ENCODE measurements at regions of chr2 and their contacts with region 1.

Region 1: DNA sequence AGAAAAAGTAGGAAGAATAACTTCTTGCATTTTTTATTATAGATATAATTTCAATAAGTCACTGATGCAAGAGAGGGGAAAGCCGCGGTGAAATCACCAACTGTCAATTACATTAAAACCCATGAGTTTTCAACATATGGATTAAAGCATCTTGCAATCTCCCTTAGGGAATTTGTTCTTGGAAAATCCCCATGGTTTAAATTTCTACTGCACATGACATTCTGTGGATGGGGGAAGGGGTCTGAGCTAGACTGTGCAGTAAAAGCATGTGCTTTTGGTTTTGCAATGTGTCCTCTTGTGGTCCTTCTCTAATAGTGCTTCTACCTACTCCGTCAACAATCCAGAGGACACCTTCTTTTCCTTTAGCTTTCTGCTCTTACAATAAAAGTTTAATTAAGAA is 894.0 kb downstream of the DCDC2C start:
- DNase-seq: no peak
- H3K4me3 ChIP-seq: no peak overlapping the region
- H3K27ac ChIP-seq: no peak overlapping the region
- H3K4me1 ChIP-seq: no peaks in the 10 kb centered on the region
- CTCF ChIP-seq: no peak

Region 2: DNA sequence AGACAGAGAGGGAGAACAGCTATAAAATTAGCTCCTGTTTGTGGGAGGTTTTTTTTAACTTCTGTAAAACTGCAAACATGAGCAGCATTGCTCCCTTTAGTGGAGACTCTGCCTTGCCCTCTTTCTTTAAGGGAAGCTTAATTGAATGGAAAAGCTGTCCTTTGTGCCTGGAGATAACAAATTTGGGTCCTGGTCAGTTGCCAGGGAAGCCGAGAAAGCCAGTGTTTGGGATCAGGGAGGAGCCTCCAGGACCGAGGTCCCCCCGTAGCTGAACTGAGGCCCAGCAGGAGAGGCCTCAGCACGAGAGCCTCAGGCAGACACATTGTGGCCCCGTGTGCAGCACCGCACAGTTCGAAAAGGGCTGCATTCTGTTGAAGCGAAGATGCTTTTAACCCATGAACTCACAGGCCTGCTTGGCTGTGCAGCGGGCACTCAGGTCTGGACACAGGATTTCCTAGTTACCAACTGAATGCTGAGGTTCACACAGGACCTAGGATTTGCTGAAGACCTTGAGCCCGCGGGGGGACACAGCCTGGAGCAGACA is 524.3 kb before region 1 on chr2:
- CTCF ChIA-PET with region 1: no interaction called
- POLR2A ChIA-PET with region 1: no interaction called
- intact Hi-C with region 1: no loop called
- DNase-seq: no peak
- H3K4me3 ChIP-seq: no peak overlapping the region
- H3K27ac ChIP-seq: no peak overlapping the region
- H3K4me1 ChIP-seq: no peaks in the 10 kb centered on the region
- CTCF ChIP-seq: no peak

Region 3: GRCh38 chr2:5841126-5841525 is 1243.7 kb after region 1 on chr2:
- CTCF ChIA-PET with region 1: interaction called, 14 read pairs
- POLR2A ChIA-PET with region 1: no interaction called
- intact Hi-C with region 1: no loop called
- DNase-seq: no peak
- H3K4me3 ChIP-seq: no peak overlapping the region
- H3K27ac ChIP-seq: no peak overlapping the region
- H3K4me1 ChIP-seq: no peaks in the 10 kb centered on the region
- CTCF ChIP-seq: no peak

Measured in OCI-LY7 (cell line).